GM12878 (cell line): ENCODE measurements at regions of chr11 and their contacts with region 1.

Region 1: DNA sequence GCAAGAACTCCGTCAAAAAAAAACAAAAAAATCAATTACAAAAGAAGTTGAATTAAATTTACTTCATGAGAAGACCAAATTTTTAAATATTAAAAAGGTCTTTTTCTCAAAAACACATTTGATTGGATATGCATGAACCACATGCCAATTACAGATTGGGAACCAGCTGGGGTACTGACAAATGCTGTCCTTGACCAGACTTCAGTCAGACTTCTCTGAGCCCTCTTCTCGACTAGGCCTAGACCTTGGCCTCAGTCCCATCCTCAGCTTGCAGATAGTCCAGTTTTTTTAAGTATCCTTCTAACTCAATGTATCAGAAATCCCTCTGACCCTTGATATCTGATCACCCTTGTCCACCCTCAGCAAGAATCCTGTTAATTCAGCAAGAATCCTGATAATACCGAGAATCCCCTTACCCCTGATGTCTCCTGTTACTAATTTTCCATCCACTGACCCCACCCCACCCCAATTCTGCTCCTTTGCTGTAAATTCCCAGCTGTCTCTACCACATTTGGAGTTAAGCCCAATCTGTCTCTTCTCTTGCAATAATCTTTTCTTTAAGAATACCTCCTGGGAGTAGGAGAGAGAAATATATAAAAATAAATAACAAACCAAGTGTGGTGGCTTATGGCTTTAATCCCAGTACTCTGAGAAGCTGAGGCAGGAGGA is 30.9 kb downstream of the OR4D9 start:
- DNase-seq: no peak
- ATAC-seq: no peak
- H3K4me3 ChIP-seq: no peak overlapping the region
- H3K27ac ChIP-seq: no peak overlapping the region
- H3K4me1 ChIP-seq: no peaks in the 10 kb centered on the region
- H3K27me3 ChIP-seq: peaks cover 0 to 1% of the 10 kb centered on the region in 2 experiments; a peak in 1 of 4 replicates
- CTCF ChIP-seq: no peak
- EP300 ChIP-seq: no peak
- POLR2A ChIP-seq: no peak
- RAD21 ChIP-seq: no peak

Region 2: DNA sequence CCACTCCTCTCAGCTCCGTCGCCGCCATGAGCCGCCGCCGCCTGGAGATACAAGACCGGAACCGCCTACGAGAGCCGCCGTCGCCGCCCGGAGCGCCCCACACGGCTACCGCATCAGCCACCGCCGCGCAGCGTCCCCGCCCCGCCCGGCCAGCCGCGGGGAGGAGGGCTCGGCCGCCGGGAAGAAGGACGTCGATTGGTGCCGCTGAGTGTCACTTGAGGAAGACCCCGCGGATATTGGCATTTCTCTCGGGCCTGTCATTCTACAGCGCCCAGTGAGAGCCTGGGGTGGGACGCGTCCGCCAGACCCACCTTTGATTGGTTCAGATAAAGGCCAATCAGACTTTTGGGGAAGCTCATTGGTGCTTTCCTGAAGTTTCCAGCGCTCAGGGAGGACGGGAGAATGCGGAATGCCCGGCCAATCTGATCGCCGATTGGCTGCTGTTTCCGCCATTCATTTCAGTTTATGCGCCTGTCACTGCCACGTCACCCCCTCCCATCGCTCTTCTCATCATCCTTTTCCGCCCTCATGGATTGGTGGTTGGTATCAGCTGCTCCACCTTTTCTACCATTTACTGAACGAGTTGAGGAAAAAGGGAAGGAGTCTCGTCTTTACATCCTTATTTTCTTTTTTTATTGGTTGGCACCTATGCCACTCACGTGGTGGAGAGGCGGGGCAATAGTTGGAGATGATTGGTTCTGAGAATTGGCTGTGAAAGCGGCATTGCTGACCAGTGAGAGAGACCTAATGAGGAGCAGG is 73.5 kb after region 1 on chr11 and contains the start of gene OSBP:
- CTCF ChIA-PET with region 1: interaction called, 20 read pairs
- POLR2A ChIA-PET with region 1: interaction called, 5 read pairs
- RAD21 ChIA-PET with region 1: interaction called, 4 read pairs
- SMC1A ChIA-PET with region 1: interaction called, 8 read pairs
- in situ Hi-C with region 1: no loop called
- intact Hi-C with region 1: no loop called
- DNase-seq: peak; percentile 100
- ATAC-seq: peak; percentile 93
- H3K4me3 ChIP-seq: peak within 1 kb of the TSS; percentile 91
- H3K27ac ChIP-seq: peak within 1 kb of the TSS; percentile 69
- H3K4me1 ChIP-seq: no peaks in the 10 kb centered on the region; the same call in none of the 2 replicates
- H3K27me3 ChIP-seq: no peaks in the 10 kb centered on the region
- CTCF ChIP-seq: no peak
- EP300 ChIP-seq: no peak
- POLR2A ChIP-seq: peak; percentile 89
- RAD21 ChIP-seq: no peak
- polyA plus RNA-seq, gene OSBP: 9.8 to 10.7 TPM

Region 3: DNA sequence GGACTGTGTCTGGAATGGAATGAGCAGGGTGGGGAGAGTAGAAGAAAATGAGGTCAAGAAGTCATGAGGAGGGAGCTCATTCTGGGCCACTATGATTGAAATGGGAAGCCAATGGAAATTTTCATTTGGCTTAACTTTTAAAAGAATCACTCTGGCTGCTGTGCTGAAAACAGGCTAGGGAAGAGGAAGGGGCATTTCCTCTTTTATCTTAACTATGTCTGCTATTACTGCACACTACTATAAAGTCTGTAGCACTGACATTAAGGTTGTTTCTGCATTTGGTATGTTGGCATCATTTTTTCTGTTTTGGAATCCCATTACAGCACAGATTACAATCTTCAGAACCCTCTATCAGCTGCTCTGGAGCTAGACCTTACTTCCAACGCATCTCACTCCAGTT is 118.3 kb after region 1 on chr11:
- CTCF ChIA-PET with region 1: interaction called, 10 read pairs
- POLR2A ChIA-PET with region 1: no interaction called
- RAD21 ChIA-PET with region 1: interaction called, 4 read pairs
- SMC1A ChIA-PET with region 1: interaction called, 6 read pairs
- in situ Hi-C with region 1: no loop called
- intact Hi-C with region 1: no loop called
- DNase-seq: no peak
- ATAC-seq: peak; percentile 56
- H3K4me3 ChIP-seq: no peak overlapping the region
- H3K27ac ChIP-seq: no peak overlapping the region
- H3K4me1 ChIP-seq: no peaks in the 10 kb centered on the region
- H3K27me3 ChIP-seq: no peaks in the 10 kb centered on the region
- CTCF ChIP-seq: no peak
- EP300 ChIP-seq: no peak
- POLR2A ChIP-seq: no peak
- RAD21 ChIP-seq: no peak

Region 4: GRCh38 chr11:59680287-59681154 is 138.2 kb after region 1 on chr11:
- CTCF ChIA-PET with region 1: interaction called, 27 read pairs
- POLR2A ChIA-PET with region 1: interaction called, 3 read pairs
- RAD21 ChIA-PET with region 1: interaction called, 10 read pairs
- SMC1A ChIA-PET with region 1: interaction called, 12 read pairs
- in situ Hi-C with region 1: loop called (anchors 10 kb)
- intact Hi-C with region 1: loop called (anchors 1 kb)
- DNase-seq: peak; percentile 20
- ATAC-seq: peak; percentile 99
- H3K4me3 ChIP-seq: no peak overlapping the region
- H3K27ac ChIP-seq: no peak overlapping the region
- H3K4me1 ChIP-seq: no peaks in the 10 kb centered on the region
- H3K27me3 ChIP-seq: no peaks in the 10 kb centered on the region
- CTCF ChIP-seq: peak; percentile 76 to 92 (median 80)
- EP300 ChIP-seq: no peak
- POLR2A ChIP-seq: no peak
- RAD21 ChIP-seq: peak; percentile 78

Region 5: DNA sequence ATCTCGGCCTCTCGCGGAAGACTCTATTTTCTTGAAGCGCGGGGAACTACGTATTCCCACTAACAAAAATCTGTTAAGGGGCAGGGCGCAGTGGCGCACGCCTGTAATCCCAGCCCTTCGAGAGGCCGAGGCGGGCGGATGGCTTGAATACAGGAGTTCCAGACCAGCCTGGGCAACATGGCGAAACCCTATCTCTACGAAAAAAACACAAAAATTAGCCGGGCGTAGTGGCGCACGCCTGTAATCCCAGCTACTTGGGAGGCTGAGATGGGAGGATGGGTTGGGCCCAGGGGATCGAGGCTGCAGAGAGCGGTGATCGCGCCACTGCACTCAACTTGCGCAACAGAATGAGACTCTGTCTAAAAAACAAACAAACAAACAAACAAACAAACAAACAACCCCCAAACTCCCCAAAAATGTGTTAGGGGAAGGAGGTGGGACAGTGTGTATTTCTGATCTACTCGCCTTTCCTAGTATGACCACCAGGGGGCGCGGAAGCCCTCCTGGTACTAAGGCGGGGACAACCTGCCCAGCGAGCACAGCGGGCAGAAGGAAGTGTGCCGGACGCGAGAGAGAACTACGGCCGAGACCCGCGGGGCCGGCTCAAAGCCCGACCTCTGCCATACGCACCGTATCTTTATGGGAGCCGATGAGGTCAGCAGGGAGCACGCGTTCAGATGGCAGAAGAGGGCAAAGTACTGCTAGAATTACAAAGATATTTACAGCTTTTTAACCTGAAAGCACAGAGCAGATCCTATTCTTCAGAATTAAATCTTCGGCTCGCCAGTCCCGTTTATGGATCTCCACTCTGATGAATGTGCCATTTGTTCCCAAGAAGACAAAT is 211.6 kb after region 1 on chr11:
- CTCF ChIA-PET with region 1: interaction called, 13 read pairs
- POLR2A ChIA-PET with region 1: no interaction called
- RAD21 ChIA-PET with region 1: interaction called, 6 read pairs
- SMC1A ChIA-PET with region 1: interaction called, 3 read pairs
- in situ Hi-C with region 1: no loop called
- intact Hi-C with region 1: no loop called
- DNase-seq: peak; percentile 50
- ATAC-seq: peak; percentile 88
- H3K4me3 ChIP-seq: peak overlapping the region; percentile 97
- H3K27ac ChIP-seq: no peak overlapping the region
- H3K4me1 ChIP-seq: peaks cover 4% of the 10 kb centered on the region
- H3K27me3 ChIP-seq: peaks cover 0 to 3% of the 10 kb centered on the region in 2 experiments; a peak in 1 of 4 replicates
- CTCF ChIP-seq: peak; percentile 81 to 89 (median 85)
- EP300 ChIP-seq: no peak
- POLR2A ChIP-seq: no peak
- RAD21 ChIP-seq: peak; percentile 79

Region 6: DNA sequence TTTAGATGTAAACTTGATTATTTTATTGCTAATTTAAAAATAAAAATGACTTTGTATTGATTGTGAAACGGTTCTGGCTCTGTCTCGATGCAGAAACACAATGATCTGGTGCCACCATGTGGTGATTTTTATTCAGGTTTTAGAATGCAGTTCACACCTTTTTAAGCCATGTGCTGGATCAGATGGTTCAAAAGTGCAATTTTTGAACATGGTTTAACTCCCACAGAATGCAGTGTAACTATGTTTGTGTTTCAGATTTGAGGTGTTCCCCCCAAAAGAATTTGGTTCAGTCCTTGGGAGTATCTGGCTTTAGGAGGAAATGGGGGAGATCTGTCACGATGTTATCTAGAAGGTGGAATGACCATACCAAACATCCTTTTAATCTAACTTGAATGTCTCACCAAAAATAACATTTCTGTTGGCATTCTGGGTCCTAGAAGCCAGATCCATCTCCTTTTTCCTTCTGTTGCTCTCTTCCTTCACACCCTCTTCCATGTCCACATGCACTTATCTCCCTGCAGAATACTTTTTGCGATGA is 260.4 kb after region 1 on chr11:
- CTCF ChIA-PET with region 1: interaction called, 13 read pairs
- POLR2A ChIA-PET with region 1: no interaction called
- RAD21 ChIA-PET with region 1: interaction called, 5 read pairs
- SMC1A ChIA-PET with region 1: interaction called, 4 read pairs
- in situ Hi-C with region 1: loop called (anchors 5 kb)
- intact Hi-C with region 1: loop called (anchors 1 kb)
- DNase-seq: no peak
- ATAC-seq: peak; percentile 82
- H3K4me3 ChIP-seq: no peak overlapping the region
- H3K27ac ChIP-seq: no peak overlapping the region
- H3K4me1 ChIP-seq: no peaks in the 10 kb centered on the region
- H3K27me3 ChIP-seq: no peaks in the 10 kb centered on the region
- CTCF ChIP-seq: peak; percentile 47 to 73 (median 65); a peak in 5 of 6 replicates
- EP300 ChIP-seq: no peak
- POLR2A ChIP-seq: no peak
- RAD21 ChIP-seq: peak; percentile 86